MCF 10A (cell line): ENCODE measurements at regions of chr17 and their contacts with region 1.

Region 1: GRCh38 chr17:42819944-42820535 is 4.0 kb downstream of the BECN1 start:
- DNase-seq: peak; percentile 77
- H3K4me3 Mint-ChIP-seq: no peak overlapping the region
- H3K27ac Mint-ChIP-seq: no peak overlapping the region
- H3K4me1 Mint-ChIP-seq: peaks cover 2% of the 10 kb centered on the region
- H3K27me3 Mint-ChIP-seq: no peaks in the 10 kb centered on the region
- CTCF ChIP-seq: peak; percentile 67

Region 2: GRCh38 chr17:42709561-42709960 is 110.5 kb before region 1 on chr17:
- CTCF ChIA-PET with region 1: no interaction called
- POLR2A ChIA-PET with region 1: no interaction called
- intact Hi-C with region 1: no loop called
- DNase-seq: no peak
- H3K4me3 Mint-ChIP-seq: no peak overlapping the region
- H3K27ac Mint-ChIP-seq: no peak overlapping the region
- H3K4me1 Mint-ChIP-seq: no peaks in the 10 kb centered on the region
- H3K27me3 Mint-ChIP-seq: no peaks in the 10 kb centered on the region
- CTCF ChIP-seq: no peak

Region 3: DNA sequence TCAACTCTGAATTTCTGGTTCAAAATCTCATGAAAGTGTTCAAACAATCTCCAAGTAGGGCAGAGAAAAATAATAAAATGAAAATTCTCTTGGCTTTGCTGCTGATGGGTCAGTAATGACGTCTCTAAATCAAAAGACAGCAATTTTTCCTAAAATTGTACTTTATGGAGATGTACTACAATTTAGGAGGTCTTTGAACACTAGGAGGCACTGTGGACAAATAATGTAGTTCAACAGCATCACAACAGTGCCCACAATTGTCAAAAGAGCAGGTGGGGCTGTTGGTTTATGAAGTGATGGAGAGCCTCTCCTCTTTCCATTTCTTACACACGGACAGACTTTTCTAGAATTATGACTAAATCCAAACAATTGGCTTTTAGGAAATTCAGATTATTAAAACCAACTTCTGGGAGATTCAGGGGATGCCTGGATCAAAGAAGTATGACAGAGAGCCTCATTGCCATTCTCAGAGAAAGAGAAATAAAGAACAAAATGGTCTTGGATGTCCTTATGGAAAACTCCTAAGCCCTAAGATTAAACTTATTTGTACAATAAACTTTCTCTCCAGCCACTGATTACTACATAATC is 99.0 kb before region 1 on chr17:
- CTCF ChIA-PET with region 1: interaction called, 3 read pairs
- POLR2A ChIA-PET with region 1: interaction called, 6 read pairs
- intact Hi-C with region 1: loop called (anchors 1 kb)
- DNase-seq: peak; percentile 71
- H3K4me3 Mint-ChIP-seq: no peak overlapping the region
- H3K27ac Mint-ChIP-seq: no peak overlapping the region
- H3K4me1 Mint-ChIP-seq: no peaks in the 10 kb centered on the region
- H3K27me3 Mint-ChIP-seq: no peaks in the 10 kb centered on the region
- CTCF ChIP-seq: peak; percentile 62

Region 4: DNA sequence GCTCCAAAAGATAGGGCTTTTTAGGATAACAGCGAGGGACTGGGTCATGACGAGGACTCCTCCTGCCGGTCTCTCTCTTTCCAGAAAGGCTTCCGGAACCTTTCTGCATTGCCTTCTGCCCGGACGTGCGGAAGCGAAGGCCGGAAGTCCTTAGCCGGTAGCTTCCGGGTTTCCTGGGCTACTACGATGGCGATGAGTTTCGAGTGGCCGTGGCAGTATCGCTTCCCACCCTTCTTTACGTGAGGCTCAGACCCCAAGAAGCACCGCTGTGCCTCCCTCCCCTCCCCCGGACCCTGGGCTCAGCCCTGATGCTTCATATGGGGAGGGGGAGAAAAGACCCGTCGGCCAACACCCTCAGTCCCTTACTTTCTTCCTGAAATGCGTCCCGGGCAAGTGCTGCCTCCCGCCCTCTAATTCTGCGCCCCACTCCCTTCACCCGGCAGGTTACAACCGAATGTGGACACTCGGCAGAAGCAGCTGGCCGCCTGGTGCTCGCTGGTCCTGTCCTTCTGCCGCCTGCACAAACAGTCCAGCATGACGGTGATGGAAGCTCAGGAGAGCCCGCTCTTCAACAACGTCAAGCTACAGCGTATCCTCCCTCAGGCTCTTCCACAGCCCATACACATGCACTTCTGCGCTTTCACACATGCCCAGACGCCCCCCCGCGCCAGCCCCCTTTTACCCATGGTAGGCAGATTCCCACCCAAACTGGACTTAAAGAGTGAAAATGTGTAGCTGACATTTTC is 46.6 kb before region 1 on chr17 and contains the start of gene VPS25:
- CTCF ChIA-PET with region 1: interaction called, 6 read pairs
- POLR2A ChIA-PET with region 1: interaction called, 31 read pairs
- intact Hi-C with region 1: no loop called
- DNase-seq: peak; percentile 84
- H3K4me3 Mint-ChIP-seq: peak within 1 kb of the TSS; percentile 87
- H3K27ac Mint-ChIP-seq: peak within 1 kb of the TSS; percentile 89
- H3K4me1 Mint-ChIP-seq: peaks cover 8% of the 10 kb centered on the region
- H3K27me3 Mint-ChIP-seq: no peaks in the 10 kb centered on the region
- CTCF ChIP-seq: no peak
- total RNA-seq, gene VPS25: 84.3 and 96.0 TPM in 2 replicates

Region 5: DNA sequence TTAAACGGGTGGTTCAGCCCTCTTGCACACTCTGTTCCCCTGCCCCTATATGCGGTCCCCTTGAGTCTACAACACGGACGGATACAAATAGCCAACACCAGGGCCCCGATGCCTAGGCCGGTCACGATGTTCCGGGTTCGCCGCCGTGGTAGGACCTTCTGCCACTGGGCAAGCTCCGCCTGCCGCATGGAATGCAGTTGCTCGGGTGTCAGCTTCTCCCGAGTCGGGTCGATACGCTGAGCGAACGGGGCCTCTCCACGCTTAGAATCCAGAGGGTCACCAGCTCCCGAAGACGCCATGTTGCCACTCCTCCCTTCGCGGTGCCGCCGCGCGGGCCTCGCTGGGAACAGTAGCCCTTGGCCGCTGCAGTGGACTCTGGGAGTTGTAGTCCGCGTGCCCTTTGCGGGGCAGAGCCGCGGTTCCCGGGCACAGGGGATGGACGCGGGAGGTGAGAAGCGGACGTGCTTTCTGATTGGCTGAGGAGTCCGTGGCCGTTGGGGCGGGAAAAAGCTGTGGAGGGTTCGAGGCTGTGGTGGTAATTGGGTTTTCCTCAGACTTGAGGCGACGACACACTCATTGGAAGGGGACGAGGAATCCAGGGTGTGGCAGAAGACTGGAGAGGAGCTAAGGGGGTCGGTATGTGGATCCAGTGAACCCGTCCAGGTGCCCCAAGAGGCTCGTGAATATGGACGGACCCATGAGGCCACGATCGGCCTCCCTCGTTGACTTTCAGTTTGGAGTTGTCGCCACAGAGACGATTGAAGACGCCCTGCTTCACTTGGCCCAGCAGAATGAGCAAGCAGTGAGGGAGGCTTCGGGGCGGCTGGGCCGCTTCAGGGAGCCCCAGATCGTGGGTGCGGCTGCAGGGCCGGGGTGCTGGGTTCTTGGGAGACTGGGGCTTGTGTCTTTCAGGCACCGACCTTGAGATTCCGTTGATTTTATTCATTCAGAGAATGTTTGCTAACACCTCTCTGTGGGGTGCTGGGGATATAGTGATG is 21.4 kb before region 1 on chr17 and contains the starts of genes CNTD1 and COA3:
- CTCF ChIA-PET with region 1: interaction called, 9 read pairs
- POLR2A ChIA-PET with region 1: interaction called, 16 read pairs
- intact Hi-C with region 1: no loop called
- DNase-seq: peak; percentile 86
- H3K4me3 Mint-ChIP-seq: peak within 1 kb of the TSS; percentile 83
- H3K27ac Mint-ChIP-seq: peak within 1 kb of the TSS; percentile 87
- H3K4me1 Mint-ChIP-seq: peaks cover 17% of the 10 kb centered on the region
- H3K27me3 Mint-ChIP-seq: no peaks in the 10 kb centered on the region
- CTCF ChIP-seq: no peak
- total RNA-seq, gene CNTD1: not detected in 2 replicates
- total RNA-seq, gene COA3: 41.0 and 52.7 TPM in 2 replicates

Region 6: GRCh38 chr17:42809250-42809649 is 10.8 kb before region 1 on chr17:
- CTCF ChIA-PET with region 1: interaction called, 14 read pairs
- POLR2A ChIA-PET with region 1: interaction called, 18 read pairs
- intact Hi-C with region 1: no loop called
- DNase-seq: peak; percentile 82
- H3K4me3 Mint-ChIP-seq: no peak overlapping the region
- H3K27ac Mint-ChIP-seq: no peak overlapping the region
- H3K4me1 Mint-ChIP-seq: peaks cover 6% of the 10 kb centered on the region
- H3K27me3 Mint-ChIP-seq: no peaks in the 10 kb centered on the region
- CTCF ChIP-seq: no peak

Region 7: DNA sequence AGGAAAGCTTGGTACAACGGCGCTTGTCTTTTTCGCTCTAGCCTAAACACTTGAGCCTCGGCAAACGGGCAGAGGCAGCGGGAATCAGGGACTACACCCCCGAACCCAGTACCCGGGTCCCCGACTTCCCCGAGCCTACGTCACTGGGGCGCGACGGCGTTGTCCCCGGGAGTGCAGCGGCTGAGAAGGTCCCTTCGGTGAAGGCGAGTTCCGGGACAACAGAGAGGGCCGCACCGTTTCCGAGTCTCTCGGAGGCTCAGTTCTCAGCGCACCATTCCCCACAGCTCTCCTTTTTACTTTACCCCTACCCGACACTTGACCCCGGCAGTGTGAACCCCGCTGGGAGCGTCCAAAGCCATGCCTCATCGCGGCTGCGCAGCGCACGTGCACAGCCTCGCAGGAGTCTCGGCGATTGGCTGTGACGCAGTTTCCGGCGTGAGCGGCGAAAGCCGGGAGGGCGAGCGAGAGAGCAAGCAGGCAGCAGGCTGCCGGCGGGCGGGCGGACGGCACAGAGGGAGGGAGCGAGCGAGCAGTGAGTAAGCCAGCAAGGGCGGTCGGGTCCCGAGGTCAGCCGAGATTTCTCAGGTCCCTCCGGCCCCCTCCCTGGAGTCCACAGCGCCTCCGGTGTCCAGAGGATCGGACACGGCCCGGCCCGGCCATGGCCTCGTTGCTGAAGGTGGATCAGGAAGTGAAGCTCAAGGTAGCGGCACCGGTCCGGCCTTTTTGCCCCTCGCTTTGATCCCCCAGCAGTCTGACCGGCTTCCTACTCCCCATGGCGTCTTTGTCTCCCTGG is 13.1 kb after region 1 on chr17 and contains the start of gene PSME3:
- CTCF ChIA-PET with region 1: interaction called, 18 read pairs
- POLR2A ChIA-PET with region 1: interaction called, 128 read pairs
- intact Hi-C with region 1: no loop called
- DNase-seq: peak; percentile 87
- H3K4me3 Mint-ChIP-seq: peak within 1 kb of the TSS; percentile 96
- H3K27ac Mint-ChIP-seq: peak within 1 kb of the TSS; percentile 99
- H3K4me1 Mint-ChIP-seq: peaks cover 25% of the 10 kb centered on the region
- H3K27me3 Mint-ChIP-seq: no peaks in the 10 kb centered on the region
- CTCF ChIP-seq: no peak
- total RNA-seq, gene PSME3: 220 and 232 TPM in 2 replicates

Region 8: DNA sequence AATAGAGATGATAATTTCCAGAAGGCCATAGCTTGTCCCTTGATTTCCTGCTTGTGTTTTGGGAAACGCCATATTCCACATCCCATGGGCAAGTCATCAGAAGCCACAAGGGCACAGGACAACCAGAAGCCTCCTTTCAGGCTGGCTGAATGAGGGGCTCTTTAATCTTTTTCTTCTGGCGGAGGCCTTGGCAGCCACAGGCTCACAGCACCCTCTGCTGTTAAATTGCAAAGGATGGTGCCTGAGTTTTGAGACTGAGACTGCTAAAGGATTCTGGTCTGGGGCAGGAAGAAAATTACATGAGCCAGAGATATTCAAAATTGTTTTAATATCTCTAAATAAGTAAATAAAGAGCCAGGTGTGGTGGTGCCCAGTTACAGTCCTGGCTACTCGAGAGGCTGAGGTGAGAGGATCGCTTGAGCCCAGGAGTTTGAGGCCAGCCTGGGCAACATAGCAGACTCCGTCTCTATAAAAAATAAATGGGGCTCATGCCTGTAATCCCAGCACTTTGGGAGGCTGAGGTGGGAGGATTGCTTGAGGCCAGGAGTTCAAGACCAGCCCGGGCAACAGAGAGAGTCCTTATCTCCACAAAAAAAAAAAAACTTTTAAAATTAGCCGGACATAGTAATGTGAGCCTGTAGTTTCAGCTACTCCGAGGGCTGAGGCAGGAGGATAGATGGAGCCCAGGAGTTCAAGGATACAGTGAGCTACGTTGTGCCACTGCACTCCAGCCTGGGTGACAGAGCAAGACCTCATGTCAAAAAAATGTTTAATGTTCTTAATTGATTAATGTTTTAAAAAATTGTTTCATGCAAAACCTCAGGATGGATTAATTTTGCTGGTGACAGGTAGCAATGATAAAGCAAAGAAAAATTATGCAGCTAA is 117.9 kb after region 1 on chr17:
- CTCF ChIA-PET with region 1: interaction called, 3 read pairs
- POLR2A ChIA-PET with region 1: no interaction called
- intact Hi-C with region 1: loop called (anchors 1 kb)
- DNase-seq: peak; percentile 60
- H3K4me3 Mint-ChIP-seq: no peak overlapping the region
- H3K27ac Mint-ChIP-seq: no peak overlapping the region
- H3K4me1 Mint-ChIP-seq: no peaks in the 10 kb centered on the region
- H3K27me3 Mint-ChIP-seq: peaks cover 12% of the 10 kb centered on the region
- CTCF ChIP-seq: peak; percentile 49